AG04449 (cell line): ENCODE measurements at regions of chr20 and their contacts with region 1.

Region 1: DNA sequence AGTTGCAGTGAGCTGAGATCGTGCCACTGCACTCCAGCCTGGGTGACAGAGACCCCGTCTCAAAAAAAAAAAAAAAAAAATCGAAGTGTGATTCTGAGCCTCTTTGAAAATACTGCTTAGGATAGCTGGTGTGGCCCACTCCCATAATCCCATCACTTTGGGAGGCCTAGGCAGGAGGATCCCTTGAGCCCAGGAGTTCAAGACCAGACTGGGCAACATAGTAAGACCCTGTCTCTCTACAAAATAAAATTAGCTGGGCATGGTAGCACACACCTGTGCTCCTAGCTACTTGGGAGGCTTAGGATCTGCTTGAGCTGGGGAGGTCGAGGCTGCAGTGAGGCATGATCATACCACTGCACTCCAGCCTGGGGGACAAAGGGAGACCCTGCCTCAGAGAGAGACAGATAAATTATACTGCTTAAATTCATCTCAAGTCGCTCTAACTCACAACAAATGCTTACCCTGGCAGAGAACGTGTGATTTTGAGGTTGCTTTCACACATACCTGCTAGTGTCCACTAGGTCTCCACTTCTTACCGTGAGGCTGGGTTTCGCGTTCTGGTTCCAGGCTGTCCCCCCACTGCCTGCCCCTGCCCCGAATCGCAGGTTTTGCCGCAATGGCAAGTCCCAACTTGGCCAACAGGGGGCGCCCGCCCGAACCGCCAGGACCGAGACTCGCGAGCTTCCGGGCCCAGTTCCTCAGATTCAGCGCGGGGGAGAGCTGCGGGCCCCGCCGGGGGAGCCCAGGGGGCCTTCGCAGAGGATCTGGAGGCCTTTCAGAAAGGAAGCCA is 12.3 kb upstream of the TMC2 start:
- DNase-seq: no peak
- H3K4me3 ChIP-seq: peak overlapping the region; percentile 79
- CTCF ChIP-seq: peak; percentile 99

Region 2: DNA sequence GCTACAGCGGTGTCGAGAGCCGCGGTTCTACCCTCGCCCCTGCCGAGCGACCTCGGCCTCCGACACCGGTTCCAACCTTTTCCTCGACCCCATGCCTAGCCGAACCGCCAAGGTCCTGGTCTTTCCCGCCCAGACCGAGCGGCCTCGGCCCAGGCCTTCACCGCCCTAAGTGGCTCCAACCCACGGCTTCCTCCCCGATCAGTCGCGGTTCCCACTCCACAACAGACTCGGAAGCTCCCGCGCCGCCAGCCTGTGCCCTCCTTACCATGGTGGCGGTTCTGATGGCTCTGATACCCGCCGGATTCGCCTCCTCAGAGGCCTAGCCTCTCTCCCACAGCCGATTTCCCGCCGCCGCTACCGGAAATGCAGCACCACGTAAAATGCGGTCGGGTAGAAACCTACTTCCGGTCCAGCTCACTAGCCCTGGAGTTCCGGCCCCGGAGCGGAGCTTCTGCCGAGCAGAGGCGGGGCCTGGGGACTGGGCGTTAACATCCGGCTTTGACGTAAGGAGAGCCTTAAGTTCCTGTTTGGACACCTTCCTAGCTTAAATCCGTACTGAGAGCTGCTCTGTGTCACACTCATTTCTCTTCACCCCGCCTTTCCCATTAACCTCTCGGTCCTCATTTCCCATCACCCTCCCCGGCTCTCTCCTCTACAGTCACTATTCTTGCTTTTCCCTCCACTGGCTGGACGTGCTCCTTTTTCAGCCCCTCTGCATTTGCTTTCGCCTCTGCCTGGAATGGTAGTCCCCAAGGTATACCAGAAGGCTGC is 53.5 kb before region 1 on chr20 and contains the start of gene SNRPB:
- CTCF ChIA-PET with region 1: interaction called, 27 read pairs
- POLR2A ChIA-PET with region 1: interaction called, 3 read pairs
- DNase-seq: peak; percentile 97
- H3K4me3 ChIP-seq: peak within 1 kb of the TSS; percentile 97
- CTCF ChIP-seq: no peak

Region 3: DNA sequence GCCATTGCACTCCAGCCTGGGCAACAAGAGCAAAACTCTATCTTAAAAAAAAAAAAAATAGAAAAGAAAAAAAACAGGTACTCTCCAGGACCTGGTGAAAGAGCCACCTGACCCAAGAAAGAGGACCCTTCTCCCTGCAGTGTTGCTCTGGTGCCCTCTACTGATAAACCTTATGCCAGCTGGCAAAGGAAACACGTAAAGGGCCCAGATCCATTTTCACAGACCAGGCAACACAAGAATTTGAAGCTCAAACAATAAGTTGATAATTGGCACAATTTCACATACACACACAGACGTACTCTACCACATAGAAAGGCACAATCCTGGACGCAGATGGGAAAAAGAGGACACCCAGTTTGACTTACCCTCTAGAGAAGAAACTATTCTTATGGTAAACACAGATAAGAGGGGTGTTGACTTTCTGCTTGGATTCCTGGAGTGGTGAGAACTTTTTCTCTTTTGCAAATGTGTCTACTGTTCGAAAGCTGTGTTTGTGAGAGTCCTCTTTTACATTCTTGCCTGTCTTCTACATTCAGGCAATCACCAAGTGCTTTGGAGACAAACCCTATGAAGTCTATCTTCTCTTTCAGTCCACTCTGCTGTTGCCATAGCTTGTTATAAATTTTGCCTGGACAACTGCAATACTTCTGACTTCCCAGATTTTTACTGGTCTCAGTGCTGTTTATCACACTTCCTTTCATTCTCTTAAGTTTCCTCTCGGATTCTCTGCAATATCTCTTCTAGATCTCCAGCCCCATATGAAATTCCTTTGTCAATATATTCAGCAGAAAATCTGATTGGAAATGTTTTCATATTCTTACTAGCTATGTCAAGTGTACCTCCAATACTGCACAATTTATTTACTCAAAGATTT is 47.1 kb before region 1 on chr20:
- CTCF ChIA-PET with region 1: interaction called, 27 read pairs
- POLR2A ChIA-PET with region 1: no interaction called
- DNase-seq: no peak
- H3K4me3 ChIP-seq: no peak overlapping the region
- CTCF ChIP-seq: no peak

Region 4: GRCh38 chr20:2508631-2509467 is 15.3 kb before region 1 on chr20 and contains the start of gene ZNF343:
- CTCF ChIA-PET with region 1: interaction called, 176 read pairs
- POLR2A ChIA-PET with region 1: interaction called, 4 read pairs
- DNase-seq: no peak
- H3K4me3 ChIP-seq: peak within 1 kb of the TSS; percentile 89
- CTCF ChIP-seq: no peak

Region 5: DNA sequence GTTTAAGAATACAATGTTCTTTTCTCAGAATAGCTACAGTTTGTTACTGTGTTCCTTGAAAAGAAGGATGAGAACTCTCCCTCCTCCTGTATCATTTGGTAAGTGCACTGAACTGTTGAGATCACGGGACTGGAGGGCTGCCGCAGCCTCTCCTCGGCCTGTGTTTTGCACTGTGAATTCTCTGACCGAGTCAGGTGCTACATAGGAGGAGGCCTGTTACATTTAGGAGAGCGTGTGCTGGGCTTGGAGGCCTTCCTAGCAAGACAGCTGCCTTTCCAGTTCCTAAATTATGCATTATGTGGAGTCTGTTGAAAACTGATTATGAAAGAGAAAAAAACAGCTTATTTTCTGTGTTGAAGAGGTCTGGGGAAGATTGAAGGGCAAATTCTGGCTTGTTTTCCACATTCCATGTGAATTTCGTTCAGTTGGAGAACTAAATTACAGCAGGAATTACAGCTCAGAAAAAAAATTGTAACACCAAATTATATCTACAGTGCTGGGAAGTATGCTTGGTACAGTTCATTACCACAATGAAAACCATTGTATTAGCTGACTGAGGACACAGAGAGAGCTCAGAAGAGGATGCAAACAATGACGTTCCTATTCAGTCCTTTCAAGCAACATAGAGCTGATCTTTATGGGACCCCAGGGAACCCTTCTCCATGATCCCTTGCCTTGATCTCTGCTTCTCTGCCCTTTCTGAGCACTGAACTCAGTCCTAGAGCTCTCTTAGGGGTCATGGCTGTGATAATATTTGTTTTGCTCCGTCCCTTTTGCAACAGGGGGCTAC is 15.0 kb after region 1 on chr20:
- CTCF ChIA-PET with region 1: interaction called, 32 read pairs
- POLR2A ChIA-PET with region 1: interaction called, 3 read pairs
- DNase-seq: no peak
- H3K4me3 ChIP-seq: no peak overlapping the region
- CTCF ChIP-seq: no peak

Region 6: DNA sequence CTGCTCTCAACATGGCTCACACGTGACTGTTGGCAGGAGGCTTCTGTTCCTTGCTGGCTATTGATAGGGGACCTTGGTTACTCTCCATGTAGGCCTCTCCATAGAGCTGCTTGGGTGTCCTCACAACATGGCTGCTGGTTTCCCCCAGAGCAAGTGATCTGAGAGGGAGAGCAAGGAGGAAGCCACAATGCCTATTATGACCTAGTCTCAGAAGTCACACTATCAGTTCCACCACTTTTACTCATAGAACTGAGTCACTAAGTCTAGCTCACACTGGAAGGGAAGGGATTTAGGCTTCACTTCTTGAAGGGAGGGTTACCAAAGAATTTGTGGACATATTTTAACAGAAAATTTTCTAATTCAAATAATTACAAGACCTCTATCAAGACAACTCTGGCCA is 119.6 kb after region 1 on chr20:
- CTCF ChIA-PET with region 1: interaction called, 17 read pairs
- POLR2A ChIA-PET with region 1: no interaction called
- DNase-seq: no peak
- H3K4me3 ChIP-seq: no peak overlapping the region
- CTCF ChIP-seq: no peak

Region 7: GRCh38 chr20:2651772-2652723 is 127.9 kb after region 1 on chr20 and contains the start of gene NOP56:
- CTCF ChIA-PET with region 1: interaction called, 17 read pairs
- POLR2A ChIA-PET with region 1: interaction called, 10 read pairs
- DNase-seq: no peak
- H3K4me3 ChIP-seq: peak within 1 kb of the TSS; percentile 90
- CTCF ChIP-seq: no peak

Region 8: GRCh38 chr20:3032624-3033023 is 508.5 kb after region 1 on chr20:
- CTCF ChIA-PET with region 1: no interaction called
- POLR2A ChIA-PET with region 1: no interaction called
- DNase-seq: no peak
- H3K4me3 ChIP-seq: no peak overlapping the region
- CTCF ChIP-seq: no peak